ENCODE measurements at regions of chr15 and their contacts with region 1.

Region 1: GRCh38 chr15:101008158-101009139 is 89.3 kb downstream of the LRRK1 start:
- DNase-seq: peak; percentile 83
- ATAC-seq: peak; percentile 85 to 89

Region 2: GRCh38 chr15:100349696-100350433 is 658.6 kb before region 1 on chr15:
- intact Hi-C with region 1: loop called in 1 of 2 experiments (anchors 10 kb)
- DNase-seq: peak; percentile 94
- ATAC-seq: peak; percentile 96 to 97

Region 3: DNA sequence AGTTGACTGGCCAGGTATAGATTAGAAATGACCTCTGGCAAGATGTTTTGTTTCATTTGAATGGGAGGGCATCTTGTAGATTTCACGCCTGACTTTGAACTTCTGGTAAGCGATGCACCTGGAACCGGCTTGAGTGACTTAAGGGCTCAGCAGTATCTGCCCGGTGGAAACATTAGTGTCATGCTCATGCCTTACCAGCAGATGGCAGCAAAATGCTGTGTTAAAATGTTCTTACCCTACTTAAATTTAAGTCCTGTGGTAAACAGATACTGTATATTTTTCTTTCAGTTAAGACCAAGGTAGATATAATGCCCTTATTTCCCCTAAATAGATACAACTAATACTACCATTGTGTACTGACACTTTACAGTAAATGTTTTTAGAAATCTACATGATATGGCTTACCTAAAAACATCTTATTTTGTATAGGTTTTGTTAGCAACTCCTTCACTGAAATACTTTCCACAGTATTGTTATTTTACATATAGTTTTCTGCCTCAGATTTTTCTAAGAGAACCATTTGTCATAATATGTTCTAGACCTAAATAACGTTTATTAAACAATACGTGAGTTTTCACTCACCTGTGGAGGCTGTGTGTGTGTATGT is 380.6 kb before region 1 on chr15:
- intact Hi-C with region 1: loop called (anchors 2 to 5 kb)
- DNase-seq: peak; percentile 39
- ATAC-seq: peak; percentile 68 to 88

Region 4: DNA sequence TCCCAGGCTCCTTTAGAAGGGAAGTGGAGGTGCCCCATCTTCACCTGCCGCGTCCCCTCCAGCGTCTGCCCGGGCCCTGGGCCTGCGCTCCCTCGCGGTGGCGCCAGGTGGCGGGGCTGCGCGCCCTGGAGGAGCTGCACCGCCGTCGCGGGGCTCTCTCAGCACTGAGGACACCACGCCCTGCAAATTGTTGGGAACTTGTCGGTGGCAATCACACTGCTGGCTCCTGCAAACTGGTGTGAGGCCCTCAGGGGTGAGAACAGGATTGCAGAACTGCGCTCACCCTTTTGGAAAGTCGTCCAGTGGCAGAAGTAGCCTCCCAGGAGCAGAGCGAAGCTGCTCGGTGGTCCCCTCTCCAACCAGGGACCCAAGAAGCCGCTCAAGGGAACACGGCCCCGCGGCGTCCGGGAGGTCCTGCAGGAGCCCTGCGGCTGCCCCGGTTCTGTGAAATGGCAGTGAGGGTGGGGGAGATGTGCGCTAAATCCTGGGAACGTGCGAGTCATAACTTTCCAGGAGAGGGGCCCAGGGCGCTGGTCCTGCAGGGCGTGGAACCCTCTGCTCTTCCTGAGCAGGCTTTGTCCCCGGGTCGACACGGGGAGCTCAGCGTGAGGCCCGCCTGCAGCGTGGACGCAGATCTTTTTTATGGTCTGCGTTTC is 90.3 kb before region 1 on chr15:
- intact Hi-C with region 1: loop called (anchors 1 to 5 kb)
- DNase-seq: peak; percentile 85
- ATAC-seq: peak; percentile 89 to 93

Region 5: DNA sequence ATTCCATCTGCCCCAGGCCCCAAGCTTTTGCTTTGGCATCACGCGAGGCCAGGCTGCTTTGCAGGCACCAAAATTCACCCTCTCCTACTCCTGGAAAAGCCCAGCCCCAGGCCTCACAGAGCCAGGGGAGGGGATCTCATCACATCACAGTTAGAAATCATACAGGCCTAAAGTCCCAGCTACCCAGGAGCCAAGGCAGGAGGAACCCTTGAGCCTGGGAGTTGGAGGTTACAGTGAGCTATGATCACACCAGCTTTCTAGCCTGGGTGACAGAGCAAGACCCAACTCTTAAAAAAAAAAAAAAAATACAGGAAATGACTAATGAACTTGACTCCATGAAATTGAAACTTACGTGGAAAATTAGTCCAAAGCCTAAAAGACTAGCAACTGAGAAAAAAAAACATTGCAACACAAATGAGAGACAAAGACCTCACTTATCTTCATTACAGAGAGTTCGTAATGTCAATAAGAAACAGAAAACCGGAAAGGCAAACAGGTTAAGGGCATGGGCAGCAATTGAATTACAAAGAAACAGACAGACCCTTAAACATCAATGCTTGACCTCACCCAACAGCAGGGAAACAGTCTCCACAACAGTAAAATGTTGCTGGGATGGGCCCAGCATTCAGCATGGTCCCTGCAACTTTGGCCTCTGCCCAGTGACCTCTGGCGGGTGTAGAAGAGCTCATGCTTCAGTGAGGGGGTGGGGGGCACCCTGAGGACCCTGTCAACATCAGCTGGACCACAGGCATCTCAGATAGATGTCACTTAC is 62.2 kb after region 1 on chr15:
- intact Hi-C with region 1: no loop called
- DNase-seq: peak; percentile 66
- ATAC-seq: peak; percentile 54 to 85

Measured in left cardiac atrium (tissue), 4 donors.